ENCODE measurements at regions of chr6 and their contacts with region 1.

Region 1: GRCh38 chr6:16128759-16129622 is at the start of gene MYLIP:
- DNase-seq: peak; percentile 93 to 97 (median 95)
- H3K4me3 ChIP-seq: peak within 1 kb of the TSS; percentile 76 to 98 (median 94)
- H3K4me3 Mint-ChIP-seq: peak within 1 kb of the TSS; percentile 96 to 100
- H3K27ac ChIP-seq: peak within 1 kb of the TSS; percentile 70 to 83
- H3K27ac Mint-ChIP-seq: peak within 1 kb of the TSS; percentile 88 to 97 (median 93)
- H3K4me1 ChIP-seq: peaks cover 25 to 42% of the 10 kb centered on the region in 2 donors
- H3K4me1 Mint-ChIP-seq: peaks cover 31% of the 10 kb centered on the region
- H3K27me3 ChIP-seq: no peaks in the 10 kb centered on the region
- H3K27me3 Mint-ChIP-seq: peaks cover 0 to 4% (median 0%) of the 10 kb centered on the region in 3 donors
- CTCF ChIP-seq: peak; percentile 73
- polyA plus RNA-seq, gene MYLIP: 19.9 to 84.0 (median 28.0) TPM

Region 2: DNA sequence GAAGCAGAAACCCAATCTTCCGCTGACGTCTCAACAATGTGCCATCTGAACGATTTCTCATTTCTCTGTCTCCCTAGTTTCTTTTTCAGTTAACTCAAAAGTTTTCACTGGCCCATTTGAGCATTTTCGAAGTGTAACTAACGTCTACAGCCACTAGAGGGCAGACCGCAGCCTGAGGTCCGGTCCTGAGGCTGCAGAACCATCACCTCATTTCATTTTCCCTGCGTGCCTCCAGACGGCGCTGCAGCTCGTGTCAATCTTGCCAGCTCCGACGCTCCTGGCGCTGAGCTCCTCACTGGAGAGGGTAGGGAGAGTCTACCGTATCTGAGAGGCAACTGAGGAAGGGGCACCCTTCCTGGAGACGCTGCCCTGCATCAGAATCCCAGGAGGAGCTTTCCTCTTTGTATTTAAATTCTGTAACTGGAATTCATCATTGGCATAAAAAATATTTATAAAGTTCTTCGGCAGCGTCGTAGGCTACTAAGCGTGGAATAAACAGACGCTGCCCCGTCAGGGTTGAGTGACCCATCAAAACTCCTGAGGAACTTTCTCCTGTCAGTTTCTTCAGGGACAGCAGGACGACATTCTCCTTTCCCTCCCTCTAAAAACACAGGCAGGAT is 437.6 kb before region 1 on chr6:
- intact Hi-C with region 1: loop called (anchors 5 to 10 kb)
- DNase-seq: peak; percentile 84 to 90 (median 88)
- H3K4me3 ChIP-seq: no peak overlapping the region
- H3K4me3 Mint-ChIP-seq: peak overlapping the region in 1 of 2 donors; percentile 35
- H3K27ac ChIP-seq: peak overlapping the region in 1 of 2 donors; percentile 50
- H3K27ac Mint-ChIP-seq: peak overlapping the region in 6 of 7 donors; percentile 0 to 96 (median 53)
- H3K4me1 ChIP-seq: peaks cover 23 to 24% of the 10 kb centered on the region in 2 donors
- H3K4me1 Mint-ChIP-seq: peaks cover 25% of the 10 kb centered on the region
- H3K27me3 ChIP-seq: no peaks in the 10 kb centered on the region
- H3K27me3 Mint-ChIP-seq: no peaks in the 10 kb centered on the region
- CTCF ChIP-seq: peak; percentile 100

Region 3: GRCh38 chr6:15879382-15880261 is 249.4 kb before region 1 on chr6:
- intact Hi-C with region 1: loop called (anchors 10 kb)
- DNase-seq: peak in 1 of 3 donors; percentile 23
- H3K4me3 ChIP-seq: no peak overlapping the region
- H3K4me3 Mint-ChIP-seq: peak overlapping the region in 1 of 2 donors; percentile 51
- H3K27ac ChIP-seq: no peak overlapping the region
- H3K27ac Mint-ChIP-seq: peak overlapping the region in 6 of 7 donors; percentile 8 to 89 (median 50)
- H3K4me1 ChIP-seq: peaks cover 64 to 65% of the 10 kb centered on the region in 2 donors
- H3K4me1 Mint-ChIP-seq: peaks cover 60% of the 10 kb centered on the region
- H3K27me3 ChIP-seq: no peaks in the 10 kb centered on the region
- H3K27me3 Mint-ChIP-seq: peaks cover 0 to 4% (median 1%) of the 10 kb centered on the region in 3 donors
- CTCF ChIP-seq: no peak

Region 4: DNA sequence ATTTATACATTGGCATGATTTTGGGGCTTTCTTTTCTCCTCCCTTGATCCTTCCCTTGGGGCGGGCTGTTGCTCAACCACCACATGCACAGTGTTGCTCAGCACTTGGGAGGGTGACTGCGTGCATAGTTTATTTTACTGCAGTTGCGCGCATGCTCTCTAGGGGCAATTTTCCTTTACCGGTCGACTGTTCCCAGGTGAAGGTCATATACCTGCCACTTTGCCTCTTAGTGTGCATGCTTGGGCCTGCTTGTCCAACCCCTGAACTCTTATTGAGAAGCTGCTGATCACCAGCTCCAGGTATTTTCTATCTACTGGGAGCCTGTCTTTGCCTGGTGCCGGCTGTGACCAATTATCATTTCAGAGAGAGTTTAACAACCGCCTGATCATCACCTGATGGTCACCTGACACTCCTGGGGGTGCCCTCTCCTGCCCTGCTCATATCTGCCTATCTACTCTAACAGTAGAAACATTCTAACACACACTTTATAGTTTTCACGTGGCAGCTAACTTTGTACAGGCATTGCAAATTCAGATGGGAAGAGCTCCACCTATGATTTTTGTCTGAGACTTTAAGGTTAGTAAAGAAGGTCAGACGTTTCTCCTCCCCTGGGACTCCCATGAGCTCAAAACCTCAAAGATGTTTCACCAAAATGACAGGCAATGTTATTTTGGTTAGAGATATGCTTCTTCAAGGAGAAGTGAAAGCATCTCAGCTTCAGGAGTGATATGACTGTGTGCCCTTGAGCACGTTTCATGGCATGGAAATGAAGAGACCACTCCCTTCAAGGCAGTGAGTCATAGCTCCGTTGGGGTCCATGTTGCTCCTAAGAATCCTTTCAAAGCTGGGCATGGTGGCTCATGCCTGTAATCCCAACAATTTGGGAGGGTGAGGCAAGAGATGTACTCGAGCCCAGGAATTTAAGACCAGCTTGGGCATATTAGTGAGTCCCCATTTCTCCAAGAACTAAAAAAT is 227.6 kb before region 1 on chr6:
- intact Hi-C with region 1: loop called in 1 of 2 experiments (anchors 10 kb)
- DNase-seq: peak; percentile 83 to 90 (median 86)
- H3K4me3 ChIP-seq: peak overlapping the region; percentile 25 to 64 (median 31)
- H3K4me3 Mint-ChIP-seq: peak overlapping the region; percentile 69 to 88
- H3K27ac ChIP-seq: peak overlapping the region; percentile 85 to 96
- H3K27ac Mint-ChIP-seq: peak overlapping the region; percentile 92 to 98 (median 96)
- H3K4me1 ChIP-seq: peaks cover 54 to 58% of the 10 kb centered on the region in 2 donors
- H3K4me1 Mint-ChIP-seq: peaks cover 62% of the 10 kb centered on the region
- H3K27me3 ChIP-seq: no peaks in the 10 kb centered on the region
- H3K27me3 Mint-ChIP-seq: peaks cover 0 to 1% (median 0%) of the 10 kb centered on the region in 3 donors
- CTCF ChIP-seq: peak; percentile 53

Measured in CD14-positive monocyte (primary cell).